Activated T-helper 2 cell treated with anti-CD3 and anti-CD28 coated beads, Interferon-gamma antibody, Interleukin-2, Interleukin-4, amounts not matched to agents 10 μg/mL and 5 μg/mL and 100 μg/mL, durations not matched to agents 14 hours and 24 hours and 36 hours (primary cell): ENCODE measurements at regions of chr4 and their contacts with region 1.

Region 1: DNA sequence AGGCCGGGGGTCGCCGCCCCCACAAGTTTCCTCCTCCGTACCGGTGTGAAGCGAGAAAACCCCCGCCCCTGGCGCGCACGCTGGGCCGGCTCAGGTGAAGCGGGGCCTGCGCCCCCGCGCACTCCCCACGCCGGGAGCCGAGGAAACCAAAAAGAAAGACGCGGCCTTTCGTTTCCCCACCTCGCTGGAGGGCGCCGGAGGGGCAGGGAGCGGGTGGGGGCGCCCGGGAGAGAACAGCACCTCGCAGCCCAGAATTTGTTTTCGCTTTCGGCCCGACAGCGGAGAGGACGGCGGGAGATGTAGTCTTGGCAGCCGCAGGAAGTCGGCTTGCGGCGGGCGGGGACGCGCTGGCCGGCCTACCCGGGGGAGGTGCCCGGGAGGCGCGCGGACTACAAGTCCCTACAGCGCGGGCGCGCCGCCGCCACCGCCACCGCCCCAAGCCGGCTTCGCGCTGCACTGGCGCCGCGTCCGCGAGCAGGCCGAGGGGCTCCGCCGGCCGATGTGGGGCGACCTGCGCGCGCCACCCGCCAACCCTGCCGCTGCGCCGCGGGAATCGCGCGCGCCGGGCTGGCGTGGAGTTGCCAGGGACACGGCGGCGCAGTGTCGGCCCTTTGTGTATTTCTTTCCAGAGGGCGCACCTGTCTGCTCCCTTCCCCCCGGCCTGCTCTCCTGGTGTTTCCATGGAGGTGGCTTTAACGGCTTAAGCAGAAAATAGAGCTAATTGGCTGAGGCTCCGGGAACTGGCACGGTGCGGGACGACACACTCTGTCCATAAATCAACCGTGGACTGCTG is at the start of gene OTUD4:
- DNase-seq: peak; percentile 94
- H3K4me3 Mint-ChIP-seq: peak within 1 kb of the TSS; percentile 96
- H3K27ac Mint-ChIP-seq: peak within 1 kb of the TSS; percentile 94
- H3K4me1 Mint-ChIP-seq: peaks cover 14% of the 10 kb centered on the region
- H3K27me3 Mint-ChIP-seq: no peaks in the 10 kb centered on the region
- total RNA-seq, gene OTUD4: 71.7 and 80.4 TPM in 2 replicates

Region 2: DNA sequence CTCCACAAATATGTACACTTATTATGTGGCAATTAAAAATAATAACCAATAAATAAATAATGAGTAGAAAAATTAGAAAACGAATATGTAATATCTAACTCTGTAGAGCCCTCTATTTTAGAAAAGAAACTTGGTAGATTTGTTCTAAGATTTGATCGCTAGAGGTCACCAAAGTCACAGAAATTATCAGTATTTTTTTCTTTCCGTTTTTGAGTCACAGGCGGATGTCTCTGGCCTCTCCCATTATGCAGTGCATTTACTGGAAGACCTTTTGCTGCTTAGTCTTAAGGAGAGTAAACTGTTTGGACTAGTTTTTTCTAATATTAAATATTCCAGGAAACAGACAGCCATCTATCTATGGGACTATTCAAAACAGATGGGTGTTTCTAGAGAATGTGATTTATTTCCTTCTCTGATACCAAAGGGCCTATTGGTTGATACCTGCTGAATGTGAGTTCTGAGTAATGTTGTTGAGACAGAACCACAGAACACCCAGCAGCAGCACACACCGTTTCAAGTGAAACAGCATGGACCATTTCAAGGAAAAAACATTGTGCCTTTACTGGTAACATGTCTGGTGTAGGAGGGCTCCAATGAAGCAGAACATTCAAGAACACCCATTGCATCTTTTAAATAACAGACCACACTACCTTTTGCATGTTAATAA is 1006.0 kb before region 1 on chr4:
- intact Hi-C with region 1: loop called (anchors 2 kb)
- DNase-seq: peak; percentile 10
- H3K4me3 Mint-ChIP-seq: no peak overlapping the region
- H3K27ac Mint-ChIP-seq: peak overlapping the region; percentile 24
- H3K4me1 Mint-ChIP-seq: peaks cover 15% of the 10 kb centered on the region
- H3K27me3 Mint-ChIP-seq: peaks cover 6% of the 10 kb centered on the region

Region 3: GRCh38 chr4:144967161-144967560 is 213.3 kb before region 1 on chr4:
- intact Hi-C with region 1: no loop called
- DNase-seq: no peak
- H3K4me3 Mint-ChIP-seq: no peak overlapping the region
- H3K27ac Mint-ChIP-seq: no peak overlapping the region
- H3K4me1 Mint-ChIP-seq: peaks cover 4% of the 10 kb centered on the region
- H3K27me3 Mint-ChIP-seq: no peaks in the 10 kb centered on the region

Region 4: DNA sequence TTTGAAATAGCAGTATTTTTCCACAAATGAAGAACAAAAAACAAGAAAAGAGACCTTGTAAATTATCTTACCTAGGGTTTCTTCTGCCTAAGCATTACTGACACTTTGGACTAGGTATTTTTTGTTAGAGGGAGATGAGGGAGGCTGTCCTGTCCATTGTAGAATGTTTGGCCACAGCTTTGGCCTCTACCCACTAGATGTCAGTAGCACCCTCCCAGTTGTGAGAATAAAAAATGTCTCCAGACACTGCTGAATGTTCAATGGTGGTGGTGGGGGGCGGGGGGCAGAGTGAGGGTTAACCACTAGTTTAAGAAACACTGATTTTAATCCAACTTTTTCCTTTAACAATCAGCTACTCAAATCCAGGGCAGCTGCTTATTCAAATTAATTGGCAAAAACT is 25.9 kb before region 1 on chr4:
- intact Hi-C with region 1: loop called (anchors 2 kb)
- DNase-seq: no peak
- H3K4me3 Mint-ChIP-seq: no peak overlapping the region
- H3K27ac Mint-ChIP-seq: no peak overlapping the region
- H3K4me1 Mint-ChIP-seq: peaks cover 30% of the 10 kb centered on the region
- H3K27me3 Mint-ChIP-seq: no peaks in the 10 kb centered on the region

Region 5: DNA sequence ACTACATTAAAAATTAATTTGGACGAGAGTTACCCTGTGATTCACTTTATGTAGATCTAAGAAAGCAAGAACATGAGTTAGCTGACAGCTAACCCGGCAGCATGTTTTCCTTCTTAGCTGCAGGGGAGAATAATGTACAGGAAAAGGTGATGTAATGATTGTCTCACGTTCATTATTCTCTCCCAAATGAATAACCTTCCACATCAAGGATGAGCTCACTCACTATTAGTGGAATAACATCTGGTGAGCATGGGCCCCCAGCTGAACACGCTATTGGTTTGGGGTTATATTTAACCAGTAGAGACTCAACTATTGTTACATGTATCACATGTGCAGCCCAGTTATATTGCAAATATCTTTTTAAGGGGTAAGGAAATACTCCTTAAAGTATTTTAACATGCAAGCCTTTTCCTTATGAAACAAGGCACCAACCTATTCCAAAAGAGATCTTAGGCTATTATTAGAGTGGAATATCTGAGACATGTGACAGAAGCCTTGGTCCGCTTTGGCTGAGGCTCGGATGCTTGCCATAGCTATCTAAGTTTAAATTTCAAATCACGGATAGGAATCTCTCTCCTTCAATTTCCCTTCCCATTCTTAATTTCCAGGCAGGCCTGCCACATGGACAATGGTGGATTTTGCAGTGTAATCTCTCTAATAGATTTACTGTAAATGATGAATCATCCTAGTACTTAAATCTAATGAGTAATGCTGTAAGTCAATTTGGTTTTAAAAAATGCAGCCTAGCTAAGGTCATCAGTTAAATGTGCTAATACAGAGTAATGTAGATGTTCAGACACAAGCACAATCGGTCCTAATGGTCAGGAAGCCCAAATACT is 98.8 kb after region 1 on chr4:
- intact Hi-C with region 1: no loop called
- DNase-seq: no peak
- H3K4me3 Mint-ChIP-seq: no peak overlapping the region
- H3K27ac Mint-ChIP-seq: no peak overlapping the region
- H3K4me1 Mint-ChIP-seq: no peaks in the 10 kb centered on the region
- H3K27me3 Mint-ChIP-seq: peaks cover 5% of the 10 kb centered on the region

Region 6: DNA sequence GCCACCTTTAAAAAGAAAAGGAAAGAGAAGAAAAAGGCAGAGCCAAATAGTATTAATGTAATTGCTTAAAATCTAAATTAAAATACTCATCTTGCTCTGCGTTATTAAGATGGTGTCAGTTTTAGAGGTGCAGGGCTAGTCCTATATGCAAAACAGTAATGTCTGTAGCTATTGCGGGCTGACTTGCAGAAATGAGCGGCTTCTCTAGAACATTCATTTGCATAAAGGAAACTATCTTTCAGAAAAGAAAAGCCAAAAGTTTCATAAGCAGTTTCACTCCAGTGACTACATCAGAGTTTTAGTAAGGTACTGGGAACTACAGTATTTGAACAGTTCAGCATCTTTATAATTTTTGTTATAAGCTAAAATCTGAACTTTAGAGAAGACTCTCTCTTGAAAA is 307.1 kb after region 1 on chr4:
- intact Hi-C with region 1: loop called (anchors 2 kb)
- DNase-seq: no peak
- H3K4me3 Mint-ChIP-seq: peak overlapping the region; percentile 20
- H3K27ac Mint-ChIP-seq: peak overlapping the region; percentile 29
- H3K4me1 Mint-ChIP-seq: peaks cover 17% of the 10 kb centered on the region
- H3K27me3 Mint-ChIP-seq: peaks cover 13% of the 10 kb centered on the region

Region 7: DNA sequence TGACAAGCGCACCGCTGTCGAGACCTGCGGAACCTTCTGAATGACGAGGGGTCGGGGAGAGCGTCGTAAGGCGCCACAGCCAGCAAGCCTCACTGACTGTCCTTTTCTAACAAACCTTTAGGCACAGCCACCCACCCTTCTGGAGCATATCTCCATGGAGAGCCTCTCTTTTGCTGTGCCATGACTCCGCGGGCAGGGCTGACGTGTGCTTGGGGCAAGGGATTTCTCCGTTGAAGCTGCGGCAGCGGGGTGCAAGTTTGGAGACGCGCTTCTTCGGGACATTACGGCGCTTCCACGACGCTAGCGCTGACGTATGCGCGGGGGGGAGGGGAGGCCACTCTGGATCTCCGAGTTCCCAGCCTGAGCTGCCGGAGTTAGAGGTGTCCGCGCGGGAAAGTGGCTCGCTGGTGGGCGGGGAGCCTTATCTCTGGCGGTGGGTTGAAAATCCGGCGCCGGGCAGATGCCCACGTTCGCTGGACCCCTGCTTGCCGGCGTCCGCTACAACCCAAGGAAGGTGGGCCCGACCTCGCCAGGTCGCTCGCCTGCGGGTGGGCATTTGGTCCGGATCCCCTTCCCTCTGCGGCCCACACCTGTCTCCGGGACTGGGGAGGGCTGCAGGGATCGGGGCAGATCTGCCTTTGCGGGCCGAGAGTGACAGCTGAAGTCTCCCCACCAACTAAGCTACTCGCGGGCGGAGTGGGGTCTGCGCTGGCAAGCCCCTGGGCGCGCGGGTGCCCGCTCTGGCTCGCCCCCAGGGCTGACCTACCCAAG is 1341.8 kb after region 1 on chr4:
- intact Hi-C with region 1: loop called (anchors 5 kb)
- DNase-seq: peak; percentile 80
- H3K4me3 Mint-ChIP-seq: no peak overlapping the region
- H3K27ac Mint-ChIP-seq: no peak overlapping the region
- H3K4me1 Mint-ChIP-seq: peaks cover 28% of the 10 kb centered on the region
- H3K27me3 Mint-ChIP-seq: no peaks in the 10 kb centered on the region